ENCODE measurements at regions of chr2 and their contacts with region 1.

Region 1: DNA sequence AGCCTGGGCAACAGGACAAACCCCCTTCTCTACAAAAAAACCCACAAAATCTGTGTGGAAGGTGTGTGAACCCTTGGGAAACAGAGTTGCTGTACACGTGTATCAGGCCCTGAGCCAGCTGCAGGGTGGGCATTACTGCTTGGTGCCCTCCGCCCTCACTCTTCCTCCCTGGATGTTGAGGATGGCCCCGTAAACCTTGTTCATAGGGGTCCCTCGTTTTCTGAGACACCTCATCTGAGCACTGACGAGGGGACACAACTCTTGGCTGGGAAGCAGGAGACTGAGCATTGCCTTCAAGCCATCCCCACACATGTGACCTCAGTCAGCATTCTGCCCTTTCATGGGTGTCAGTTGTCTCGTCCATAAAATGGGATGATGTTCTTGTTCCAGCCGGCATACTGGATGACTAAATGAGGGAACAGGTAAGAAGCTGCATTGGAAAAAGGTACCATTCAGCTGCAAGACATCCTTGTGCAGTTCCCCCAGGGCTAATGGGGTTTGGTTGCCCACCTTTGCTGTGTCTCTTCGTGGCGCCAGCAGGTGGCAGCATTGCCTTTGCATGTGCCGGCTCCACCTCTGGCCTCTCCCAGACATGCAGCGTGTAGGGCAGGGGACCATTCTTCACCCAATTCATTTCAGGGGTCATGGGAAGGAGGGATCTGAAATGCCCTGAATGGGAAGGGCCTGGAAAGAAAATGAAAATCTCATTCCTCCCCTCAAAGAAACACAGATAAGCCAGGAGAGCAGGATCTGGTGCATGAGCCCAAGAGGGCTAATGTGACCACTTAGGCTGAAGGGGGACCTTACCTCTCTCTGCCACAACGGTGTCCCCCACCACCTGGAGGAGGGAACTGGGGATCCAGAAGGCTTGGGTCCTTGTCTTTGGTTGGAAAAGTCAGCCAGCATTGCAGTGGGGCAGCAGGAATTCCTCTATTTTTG is 36.4 kb upstream of the HAAO start:
- DNase-seq: peak; percentile 89

Region 2: DNA sequence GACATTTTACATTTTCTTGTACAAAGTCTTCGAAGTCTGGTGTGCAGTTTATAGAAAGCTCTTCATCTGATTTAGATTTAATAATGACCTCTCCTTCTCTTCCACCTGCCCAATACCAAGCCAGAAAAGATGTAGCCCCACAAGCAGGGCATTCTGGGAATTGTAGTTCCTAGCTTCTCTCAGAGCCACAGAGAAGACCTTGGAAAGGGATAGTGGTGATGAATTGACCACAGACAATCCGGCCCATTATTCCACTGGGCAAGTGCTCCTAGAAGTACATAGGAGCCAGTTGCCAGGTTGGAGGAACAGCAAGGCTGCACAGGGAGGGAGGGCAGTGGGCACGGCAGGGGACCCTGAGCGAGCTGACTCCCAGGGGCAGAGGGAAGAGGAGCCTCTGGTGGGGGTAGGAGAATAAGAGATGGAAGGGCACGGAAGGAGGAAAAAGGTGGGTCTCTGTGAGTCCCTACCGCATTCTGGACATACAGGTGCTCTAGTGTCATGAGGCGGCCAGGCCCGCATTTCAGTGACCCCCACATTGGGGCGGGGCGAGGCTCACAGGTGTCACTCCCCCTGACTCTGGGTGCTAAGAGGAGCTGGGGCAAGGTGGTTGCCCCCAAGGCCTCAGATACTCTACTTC is 116.1 kb after region 1 on chr2:
- intact Hi-C with region 1: loop called (anchors 2 kb)
- DNase-seq: no peak

Region 3: GRCh38 chr2:43131024-43131889 is 302.5 kb after region 1 on chr2:
- intact Hi-C with region 1: loop called (anchors 10 kb)
- DNase-seq: peak; percentile 91

Region 4: DNA sequence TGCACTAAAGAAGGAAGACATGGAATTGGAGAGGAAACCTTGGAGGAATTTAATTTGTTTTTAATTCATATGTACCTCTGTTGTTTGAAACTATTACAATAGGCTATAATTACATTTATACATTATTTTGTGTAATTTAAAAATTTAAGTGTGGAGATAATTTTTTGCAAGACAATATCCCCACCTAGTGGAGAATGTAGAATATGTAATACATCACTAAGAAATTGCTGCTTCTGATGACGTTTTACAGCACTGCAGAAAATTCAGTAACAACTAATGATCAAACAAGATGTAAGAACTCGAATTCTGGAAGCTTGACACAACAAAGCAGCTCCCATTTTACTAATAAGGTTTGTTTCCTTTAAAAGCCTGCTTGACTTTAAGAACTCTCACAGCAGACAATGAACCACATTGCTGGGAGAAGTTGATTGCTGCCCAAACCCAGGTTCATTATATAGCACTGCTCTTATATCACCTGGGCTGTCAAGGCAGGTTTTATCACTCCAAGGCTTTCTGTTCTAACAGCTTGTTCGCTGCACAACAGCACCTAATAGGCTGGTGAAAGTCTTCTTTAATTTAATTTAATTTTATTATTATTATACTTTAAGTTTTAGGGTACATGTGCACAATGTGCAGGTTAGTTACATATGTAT is 713.7 kb after region 1 on chr2:
- intact Hi-C with region 1: loop called (anchors 5 kb)
- DNase-seq: no peak

Region 5: GRCh38 chr2:43611987-43612894 is 783.5 kb after region 1 on chr2:
- intact Hi-C with region 1: loop called (anchors 5 kb)
- DNase-seq: no peak